ENCODE measurements at regions of chr12 and their contacts with region 1.

Region 1: DNA sequence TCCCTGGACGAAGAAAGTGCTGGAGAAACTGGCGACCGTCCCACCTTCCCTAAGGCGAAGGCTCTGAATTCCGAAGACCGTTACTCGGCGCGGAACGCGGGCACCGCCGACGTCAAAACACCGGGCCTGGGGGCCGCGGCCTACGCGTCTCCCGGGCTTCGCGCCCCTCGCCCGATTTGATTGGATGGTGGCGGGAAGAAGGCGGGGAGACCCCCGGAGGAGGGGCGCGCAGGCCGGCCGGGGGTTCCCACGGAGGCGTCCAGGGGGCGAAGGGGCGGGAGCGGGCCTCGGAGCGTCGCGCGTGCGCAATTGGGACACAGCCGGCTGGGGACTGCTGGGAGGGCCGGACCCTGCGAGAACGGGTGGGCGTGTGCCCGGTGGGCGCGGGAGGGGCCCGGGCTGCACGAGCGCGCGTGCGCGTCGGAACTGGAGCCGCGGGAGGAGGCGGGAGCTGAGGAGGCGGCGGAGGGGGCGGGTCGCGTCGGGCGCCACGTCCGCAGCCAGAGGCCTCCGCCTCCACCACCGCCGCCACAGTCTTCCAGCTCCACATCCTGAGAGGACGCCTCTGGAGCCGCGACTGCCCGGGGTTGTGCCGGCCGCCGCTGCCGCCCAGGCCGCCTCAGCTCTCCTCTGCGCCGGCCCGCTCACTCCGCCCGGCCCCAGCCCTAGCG is at the start of gene TMEM263:
- DNase-seq: peak; percentile 78 to 91 (median 86)
- ATAC-seq: peak; percentile 90
- H3K4me3 ChIP-seq: peak within 1 kb of the TSS; percentile 94
- H3K4me3 Mint-ChIP-seq: peak within 1 kb of the TSS; percentile 88 to 99 (median 96)
- H3K27ac ChIP-seq: peak within 1 kb of the TSS; percentile 94
- H3K27ac Mint-ChIP-seq: peak within 1 kb of the TSS; percentile 93 to 97 (median 96)
- H3K4me1 ChIP-seq: peaks cover 8 to 10% of the 10 kb centered on the region in 2 donors
- H3K4me1 Mint-ChIP-seq: peaks cover 17 to 57% (median 38%) of the 10 kb centered on the region in 7 donors
- H3K27me3 ChIP-seq: no peaks in the 10 kb centered on the region
- H3K27me3 Mint-ChIP-seq: peaks cover 0 to 11% (median 0%) of the 10 kb centered on the region in 5 donors
- total RNA-seq, gene TMEM263: 20.0 to 45.5 (median 31.5) TPM

Region 2: DNA sequence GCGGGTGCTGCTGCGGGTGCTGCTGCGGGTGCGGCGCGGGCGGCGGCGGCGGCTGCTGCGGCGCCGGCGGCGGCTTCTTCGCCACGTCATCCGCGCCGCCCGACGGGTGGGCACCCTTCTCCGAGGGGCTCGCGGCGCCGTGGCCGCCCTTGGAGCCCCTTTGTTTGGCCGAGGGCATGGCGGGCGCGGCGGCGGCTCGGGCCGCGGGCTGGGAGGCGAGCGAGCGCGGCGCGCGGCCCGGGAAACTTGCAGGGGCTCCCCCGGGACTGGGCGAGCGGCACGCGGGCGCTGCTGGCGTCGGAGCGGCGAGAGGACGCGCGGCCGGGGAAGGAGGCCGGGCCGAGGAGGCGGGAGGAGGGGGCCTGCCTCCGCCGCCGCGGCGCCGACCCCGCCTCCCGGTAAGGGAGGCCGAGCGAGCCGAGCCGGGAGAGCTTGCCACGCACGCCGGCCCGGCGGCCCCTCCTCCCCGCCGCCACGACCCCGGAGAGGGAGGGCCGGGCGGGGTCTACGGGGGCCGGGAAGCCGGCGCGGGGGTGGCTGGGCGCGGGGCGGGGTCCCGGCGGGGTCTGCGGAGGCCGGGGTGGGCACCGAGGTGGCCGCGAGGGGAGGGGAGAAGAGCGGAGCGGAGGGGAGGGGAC is 707.7 kb before region 1 on chr12 and contains the start of gene CKAP4:
- CTCF ChIA-PET with region 1: no interaction called
- POLR2A ChIA-PET with region 1: no interaction called
- intact Hi-C with region 1: loop called (anchors 1 to 2 kb)
- DNase-seq: peak; percentile 45 to 65 (median 55)
- ATAC-seq: peak; percentile 59
- H3K4me3 ChIP-seq: peak within 1 kb of the TSS; percentile 69
- H3K4me3 Mint-ChIP-seq: peak within 1 kb of the TSS; percentile 81 to 92 (median 86)
- H3K27ac ChIP-seq: peak within 1 kb of the TSS; percentile 80
- H3K27ac Mint-ChIP-seq: peak within 1 kb of the TSS; percentile 58 to 98 (median 94)
- H3K4me1 ChIP-seq: peaks cover 17 to 22% of the 10 kb centered on the region in 2 donors
- H3K4me1 Mint-ChIP-seq: peaks cover 13 to 37% (median 31%) of the 10 kb centered on the region in 7 donors
- H3K27me3 ChIP-seq: no peaks in the 10 kb centered on the region
- H3K27me3 Mint-ChIP-seq: peaks cover 0 to 19% (median 0%) of the 10 kb centered on the region in 5 donors
- total RNA-seq, gene CKAP4: 4.3 to 27.2 (median 13.0) TPM

Region 3: GRCh38 chr12:106774005-106774807 is 181.3 kb before region 1 on chr12 and contains the start of gene RIC8B:
- CTCF ChIA-PET with region 1: interaction called, 4 read pairs
- POLR2A ChIA-PET with region 1: no interaction called
- intact Hi-C with region 1: loop called (anchors 1 kb)
- DNase-seq: peak; percentile 63 to 84 (median 70)
- ATAC-seq: peak; percentile 91
- H3K4me3 ChIP-seq: peak within 1 kb of the TSS; percentile 84
- H3K4me3 Mint-ChIP-seq: peak within 1 kb of the TSS; percentile 92 to 100 (median 97)
- H3K27ac ChIP-seq: peak within 1 kb of the TSS; percentile 88
- H3K27ac Mint-ChIP-seq: peak within 1 kb of the TSS; percentile 94 to 99 (median 97)
- H3K4me1 ChIP-seq: peaks cover 0 to 19% of the 10 kb centered on the region in 2 donors
- H3K4me1 Mint-ChIP-seq: peaks cover 22 to 49% (median 39%) of the 10 kb centered on the region in 7 donors
- H3K27me3 ChIP-seq: no peaks in the 10 kb centered on the region
- H3K27me3 Mint-ChIP-seq: peaks cover 0 to 7% (median 0%) of the 10 kb centered on the region in 5 donors
- total RNA-seq, gene RIC8B: 9.8 to 21.1 (median 15.6) TPM

Region 4: DNA sequence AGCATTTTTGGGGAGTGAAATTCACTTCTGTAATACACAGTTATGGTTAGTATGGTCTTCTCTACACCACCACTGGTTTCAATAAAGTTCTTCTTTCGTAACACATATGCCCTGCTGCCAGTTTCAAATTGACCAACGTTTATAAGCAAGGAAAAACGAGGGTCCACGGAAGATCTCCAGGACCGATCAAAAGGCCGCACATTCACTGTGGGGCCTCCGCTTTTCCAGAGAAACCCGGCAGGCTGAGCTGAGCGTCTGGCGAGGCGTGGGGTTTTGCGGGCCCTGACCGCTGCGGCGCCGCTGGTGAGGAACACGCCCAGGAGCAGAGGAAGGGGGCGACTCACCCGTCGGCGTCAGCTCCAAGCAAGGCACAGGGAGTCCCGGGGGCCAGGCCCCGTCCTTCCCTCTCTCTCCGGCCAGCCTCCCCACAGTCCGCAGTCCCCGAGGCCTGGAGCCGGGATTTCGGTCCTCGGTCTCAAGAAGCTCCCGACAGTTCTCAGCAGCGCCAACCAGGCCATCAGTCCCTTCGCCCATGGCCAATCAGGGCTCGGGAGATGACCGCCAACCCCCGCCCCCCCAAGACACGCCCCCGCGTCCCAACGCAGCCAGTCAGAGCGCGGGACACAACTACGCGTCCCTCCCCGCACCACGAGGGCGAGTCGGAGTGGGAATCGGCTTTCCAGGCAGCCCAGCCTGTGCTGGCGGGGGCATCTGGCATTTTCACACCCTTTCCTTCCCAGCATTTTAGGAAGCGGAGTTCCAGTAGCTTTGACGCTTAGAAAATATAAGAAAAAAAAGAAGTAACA is 31.3 kb after region 1 on chr12 and contains the start of gene MTERF2:
- CTCF ChIA-PET with region 1: interaction called, 3 read pairs
- POLR2A ChIA-PET with region 1: interaction called, 16 read pairs
- intact Hi-C with region 1: loop called (anchors 1 kb)
- DNase-seq: peak; percentile 52 to 78 (median 67)
- ATAC-seq: peak; percentile 99
- H3K4me3 ChIP-seq: peak within 1 kb of the TSS; percentile 88
- H3K4me3 Mint-ChIP-seq: peak within 1 kb of the TSS; percentile 91 to 97 (median 96)
- H3K27ac ChIP-seq: peak within 1 kb of the TSS; percentile 77
- H3K27ac Mint-ChIP-seq: peak within 1 kb of the TSS; percentile 79 to 92 (median 85)
- H3K4me1 ChIP-seq: peaks cover 12 to 14% of the 10 kb centered on the region in 2 donors
- H3K4me1 Mint-ChIP-seq: peaks cover 29 to 45% (median 41%) of the 10 kb centered on the region in 7 donors
- H3K27me3 ChIP-seq: no peaks in the 10 kb centered on the region
- H3K27me3 Mint-ChIP-seq: peaks cover 0 to 2% (median 0%) of the 10 kb centered on the region in 5 donors
- total RNA-seq, gene MTERF2: 7.1 to 12.9 (median 9.7) TPM

Region 5: GRCh38 chr12:107685360-107686248 is 730.1 kb after region 1 on chr12 and contains the start of gene PWP1:
- CTCF ChIA-PET with region 1: no interaction called
- POLR2A ChIA-PET with region 1: no interaction called
- intact Hi-C with region 1: loop called (anchors 1 to 10 kb)
- DNase-seq: peak; percentile 93 to 97 (median 95)
- ATAC-seq: peak; percentile 93
- H3K4me3 ChIP-seq: peak within 1 kb of the TSS; percentile 78
- H3K4me3 Mint-ChIP-seq: peak within 1 kb of the TSS; percentile 90 to 99 (median 95)
- H3K27ac ChIP-seq: peak within 1 kb of the TSS; percentile 88
- H3K27ac Mint-ChIP-seq: peak within 1 kb of the TSS; percentile 90 to 99 (median 97)
- H3K4me1 ChIP-seq: peaks cover 12 to 19% of the 10 kb centered on the region in 2 donors
- H3K4me1 Mint-ChIP-seq: peaks cover 23 to 40% (median 35%) of the 10 kb centered on the region in 7 donors
- H3K27me3 ChIP-seq: no peaks in the 10 kb centered on the region
- H3K27me3 Mint-ChIP-seq: peaks cover 0 to 3% (median 0%) of the 10 kb centered on the region in 5 donors
- total RNA-seq, gene PWP1: 20.9 to 42.5 (median 25.7) TPM